ENCODE measurements at regions of chr9 and their contacts with region 1.

Region 1: DNA sequence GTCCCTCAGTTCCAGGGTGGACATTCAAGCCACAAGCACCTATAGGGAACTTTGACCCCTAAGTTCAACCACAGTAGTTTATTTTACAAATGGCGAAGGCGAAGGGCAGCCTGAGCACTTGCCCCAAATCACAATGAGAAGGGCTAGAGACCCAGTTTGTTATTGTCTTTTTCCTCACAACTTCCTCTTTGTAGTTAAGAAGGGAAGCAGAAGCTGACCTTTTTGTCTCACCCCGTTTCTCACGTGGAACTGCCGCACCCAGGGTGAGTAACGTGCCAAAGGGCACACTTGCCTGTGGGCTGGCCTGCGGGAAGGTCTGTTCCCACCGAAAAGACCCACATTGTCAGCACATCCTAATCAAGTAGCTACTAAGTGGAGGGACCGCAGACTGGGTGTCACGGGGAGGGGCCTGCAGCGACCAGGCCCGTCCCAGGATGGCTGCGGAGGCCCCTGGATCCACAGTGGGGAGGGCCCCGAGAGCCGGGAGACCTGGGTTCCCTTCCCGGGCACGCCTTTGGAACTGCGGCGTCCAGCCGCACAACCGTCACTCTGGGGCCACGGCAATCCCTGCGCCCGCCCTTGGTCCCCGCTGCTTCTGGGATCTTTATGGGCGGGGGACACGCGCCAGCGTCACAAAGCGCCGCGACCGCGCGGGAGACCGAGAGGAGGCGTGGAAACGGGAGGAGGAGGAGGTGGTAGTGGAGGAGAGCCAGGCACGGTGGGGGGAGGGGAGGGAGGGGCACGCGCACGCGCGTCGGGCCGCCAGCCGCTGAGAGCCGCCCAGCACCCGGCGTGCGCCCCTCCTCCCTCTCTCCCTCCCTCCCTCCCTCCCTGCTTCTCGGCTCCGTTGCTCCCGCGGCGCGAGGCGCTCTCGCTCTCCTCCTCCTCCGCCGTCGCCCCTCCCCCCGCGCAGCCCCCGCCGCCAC is at the start of gene UBE2R2:
- DNase-seq: peak; percentile 97
- ATAC-seq: peak; percentile 81
- H3K4me3 Mint-ChIP-seq: peak within 1 kb of the TSS; percentile 89
- H3K27ac Mint-ChIP-seq: peak within 1 kb of the TSS; percentile 92
- H3K4me1 Mint-ChIP-seq: peaks cover 56% of the 10 kb centered on the region
- H3K27me3 Mint-ChIP-seq: no peaks in the 10 kb centered on the region
- total RNA-seq, gene UBE2R2: 47.7 to 49.5 TPM

Region 2: DNA sequence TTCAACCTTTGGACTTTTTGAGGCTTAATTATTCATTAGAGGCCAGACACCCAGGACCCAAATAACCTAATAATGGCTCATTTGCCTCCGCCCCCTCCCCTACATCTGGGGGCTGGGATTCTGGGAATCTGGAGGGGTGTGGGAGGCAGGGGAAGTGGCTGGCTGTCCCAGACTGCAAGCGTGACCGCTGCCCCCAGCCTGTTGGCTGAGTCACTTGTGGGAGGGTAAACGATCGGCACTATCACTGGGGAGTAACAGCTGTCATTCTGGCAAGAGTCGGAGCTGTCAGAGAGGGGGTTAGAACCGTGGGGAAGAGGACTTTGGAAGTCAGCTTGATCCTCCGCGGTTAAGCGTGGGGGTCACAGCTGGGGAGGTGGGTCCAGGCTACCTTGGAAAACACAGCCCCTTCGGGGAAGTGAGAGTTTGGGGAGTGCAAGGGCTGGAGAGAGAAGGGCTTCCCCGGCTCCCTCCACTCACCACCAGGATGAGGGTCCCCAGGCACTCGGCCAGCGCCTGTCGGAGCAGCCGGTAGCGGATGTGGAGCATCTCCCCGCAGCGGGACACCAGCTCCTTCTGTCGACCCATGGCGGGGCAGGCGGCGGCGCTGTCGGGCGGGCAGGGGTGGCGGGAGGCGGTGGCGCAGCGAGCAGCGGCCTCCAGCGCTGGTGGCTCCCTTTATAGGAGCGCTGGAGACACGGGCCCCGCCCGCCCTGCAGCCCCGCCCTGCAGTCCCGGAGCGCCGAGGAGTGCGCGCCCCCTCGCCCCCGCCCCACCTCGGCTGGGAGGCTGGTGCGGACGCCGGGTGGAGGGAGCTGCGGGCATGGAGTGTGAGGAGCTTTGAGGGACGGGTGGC is 369.4 kb before region 1 on chr9 and contains the start of gene AQP3:
- CTCF ChIA-PET with region 1: no interaction called
- POLR2A ChIA-PET with region 1: no interaction called
- intact Hi-C with region 1: loop called in 1 of 2 experiments (anchors 2 kb)
- DNase-seq: peak; percentile 85
- ATAC-seq: peak; percentile 68
- H3K4me3 Mint-ChIP-seq: peak within 1 kb of the TSS; percentile 79
- H3K27ac Mint-ChIP-seq: peak within 1 kb of the TSS; percentile 93
- H3K4me1 Mint-ChIP-seq: peaks cover 43% of the 10 kb centered on the region
- H3K27me3 Mint-ChIP-seq: no peaks in the 10 kb centered on the region
- total RNA-seq, gene AQP3: 8.5 to 11.3 TPM

Region 3: GRCh38 chr9:33881635-33882034 is 65.0 kb after region 1 on chr9:
- CTCF ChIA-PET with region 1: interaction called, 8 read pairs
- POLR2A ChIA-PET with region 1: interaction called, 3 read pairs
- intact Hi-C with region 1: loop called in 1 of 2 experiments (anchors 2 kb)
- DNase-seq: no peak
- ATAC-seq: peak; percentile 79
- H3K4me3 Mint-ChIP-seq: peak overlapping the region; percentile 23
- H3K27ac Mint-ChIP-seq: peak overlapping the region; percentile 93
- H3K4me1 Mint-ChIP-seq: peaks cover 65% of the 10 kb centered on the region
- H3K27me3 Mint-ChIP-seq: no peaks in the 10 kb centered on the region

Region 4: GRCh38 chr9:33942471-33943083 is 126.0 kb after region 1 on chr9:
- CTCF ChIA-PET with region 1: no interaction called
- POLR2A ChIA-PET with region 1: no interaction called
- intact Hi-C with region 1: no loop called
- DNase-seq: no peak
- ATAC-seq: no peak
- H3K4me3 Mint-ChIP-seq: no peak overlapping the region
- H3K27ac Mint-ChIP-seq: peak overlapping the region; percentile 47
- H3K4me1 Mint-ChIP-seq: no peaks in the 10 kb centered on the region
- H3K27me3 Mint-ChIP-seq: no peaks in the 10 kb centered on the region

Region 5: GRCh38 chr9:34072868-34073590 is 256.4 kb after region 1 on chr9:
- CTCF ChIA-PET with region 1: interaction called, 10 read pairs
- POLR2A ChIA-PET with region 1: interaction called, 3 read pairs
- intact Hi-C with region 1: loop called in 1 of 2 experiments (anchors 2 kb)
- DNase-seq: no peak
- ATAC-seq: no peak
- H3K4me3 Mint-ChIP-seq: no peak overlapping the region
- H3K27ac Mint-ChIP-seq: no peak overlapping the region
- H3K4me1 Mint-ChIP-seq: no peaks in the 10 kb centered on the region
- H3K27me3 Mint-ChIP-seq: no peaks in the 10 kb centered on the region

Region 6: DNA sequence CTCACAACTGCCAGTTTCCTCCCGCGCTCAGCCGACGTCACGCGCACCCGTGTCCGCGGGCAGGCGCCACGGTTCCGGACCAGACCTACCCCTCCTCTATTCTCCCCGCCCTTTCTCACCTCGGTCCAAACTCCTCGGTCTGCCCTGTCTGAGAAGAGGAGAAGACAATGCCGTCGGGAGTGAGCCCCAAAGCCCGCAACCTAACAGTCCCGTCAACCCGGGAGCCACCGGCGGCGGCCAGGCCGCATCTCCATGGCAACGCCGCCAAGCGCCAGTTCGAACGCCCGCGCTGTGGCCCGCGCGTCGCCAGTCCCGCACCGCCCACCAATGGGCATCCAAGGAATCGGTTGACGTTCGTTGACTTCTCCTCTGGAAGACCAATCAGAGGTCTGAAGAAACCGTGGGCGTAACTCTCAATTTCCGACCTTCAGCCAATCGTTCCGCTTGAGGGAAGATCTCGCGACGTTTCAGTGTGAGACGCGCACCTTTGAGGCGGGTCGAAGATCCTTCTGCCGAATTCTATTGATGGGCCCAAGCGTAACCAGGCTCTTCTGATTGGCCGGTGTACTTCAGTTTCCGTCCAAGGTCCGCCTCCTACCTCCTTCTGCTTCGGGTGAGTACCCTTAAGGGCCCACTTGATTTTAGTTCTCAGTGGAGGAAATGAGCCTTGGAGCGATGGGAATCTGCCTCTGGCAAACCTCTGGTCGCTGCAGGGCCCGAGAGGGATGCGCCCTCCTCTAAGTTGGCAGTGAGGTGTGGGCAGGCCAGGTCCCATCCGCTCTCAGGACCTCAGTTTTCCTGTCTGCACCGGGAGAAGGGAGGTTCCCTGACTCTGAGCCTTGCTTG is 512.6 kb after region 1 on chr9 and contains the starts of genes KIF24 and NUDT2:
- CTCF ChIA-PET with region 1: no interaction called
- POLR2A ChIA-PET with region 1: no interaction called
- intact Hi-C with region 1: loop called in 1 of 2 experiments (anchors 1 kb)
- DNase-seq: peak; percentile 98
- ATAC-seq: peak; percentile 97
- H3K4me3 Mint-ChIP-seq: peak within 1 kb of the TSS; percentile 95
- H3K27ac Mint-ChIP-seq: peak within 1 kb of the TSS; percentile 98
- H3K4me1 Mint-ChIP-seq: peaks cover 32% of the 10 kb centered on the region
- H3K27me3 Mint-ChIP-seq: no peaks in the 10 kb centered on the region
- total RNA-seq, gene KIF24: 5.9 to 7.7 TPM
- total RNA-seq, gene NUDT2: 14.9 to 22.9 TPM